ENCODE measurements at regions of chr18 and their contacts with region 1.

Region 1: DNA sequence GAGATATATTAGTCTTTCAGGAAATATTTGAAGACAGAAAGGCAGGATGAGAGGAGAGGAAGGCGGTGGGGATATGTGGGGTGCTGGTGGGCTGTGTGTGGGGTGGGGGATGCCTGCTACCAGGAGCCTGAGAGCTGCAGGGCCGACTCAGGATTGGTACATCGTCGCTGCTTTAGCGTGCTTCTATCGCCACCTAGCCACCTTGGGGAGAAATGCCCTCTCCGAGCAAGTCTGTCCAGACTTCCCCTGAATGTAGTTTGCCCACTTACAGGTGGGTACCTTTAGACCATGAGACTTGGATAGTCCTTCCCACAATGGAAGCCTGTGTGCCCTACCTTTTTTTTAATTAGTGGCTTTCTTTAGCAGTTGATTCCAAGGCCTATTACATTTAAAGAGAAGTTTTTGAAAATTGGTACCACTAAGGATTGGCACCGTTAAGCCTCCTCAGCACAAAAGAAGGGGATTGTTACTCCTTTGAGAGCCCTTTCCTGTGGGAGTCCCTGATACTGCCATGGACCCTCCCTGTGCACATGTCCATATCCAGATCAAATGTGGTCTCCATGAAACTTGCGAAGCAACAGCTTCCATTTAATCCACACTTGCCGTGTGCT is 114.1 kb upstream of the NDUFV2 start:
- DNase-seq: no peak
- H3K4me3 ChIP-seq: no peak overlapping the region
- H3K27ac ChIP-seq: no peak overlapping the region
- H3K4me1 ChIP-seq: peaks cover 10% of the 10 kb centered on the region
- H3K27me3 ChIP-seq: no peaks in the 10 kb centered on the region
- CTCF ChIP-seq: peak; percentile 32 to 70 (median 61)
- POLR2A ChIP-seq: no peak

Region 2: DNA sequence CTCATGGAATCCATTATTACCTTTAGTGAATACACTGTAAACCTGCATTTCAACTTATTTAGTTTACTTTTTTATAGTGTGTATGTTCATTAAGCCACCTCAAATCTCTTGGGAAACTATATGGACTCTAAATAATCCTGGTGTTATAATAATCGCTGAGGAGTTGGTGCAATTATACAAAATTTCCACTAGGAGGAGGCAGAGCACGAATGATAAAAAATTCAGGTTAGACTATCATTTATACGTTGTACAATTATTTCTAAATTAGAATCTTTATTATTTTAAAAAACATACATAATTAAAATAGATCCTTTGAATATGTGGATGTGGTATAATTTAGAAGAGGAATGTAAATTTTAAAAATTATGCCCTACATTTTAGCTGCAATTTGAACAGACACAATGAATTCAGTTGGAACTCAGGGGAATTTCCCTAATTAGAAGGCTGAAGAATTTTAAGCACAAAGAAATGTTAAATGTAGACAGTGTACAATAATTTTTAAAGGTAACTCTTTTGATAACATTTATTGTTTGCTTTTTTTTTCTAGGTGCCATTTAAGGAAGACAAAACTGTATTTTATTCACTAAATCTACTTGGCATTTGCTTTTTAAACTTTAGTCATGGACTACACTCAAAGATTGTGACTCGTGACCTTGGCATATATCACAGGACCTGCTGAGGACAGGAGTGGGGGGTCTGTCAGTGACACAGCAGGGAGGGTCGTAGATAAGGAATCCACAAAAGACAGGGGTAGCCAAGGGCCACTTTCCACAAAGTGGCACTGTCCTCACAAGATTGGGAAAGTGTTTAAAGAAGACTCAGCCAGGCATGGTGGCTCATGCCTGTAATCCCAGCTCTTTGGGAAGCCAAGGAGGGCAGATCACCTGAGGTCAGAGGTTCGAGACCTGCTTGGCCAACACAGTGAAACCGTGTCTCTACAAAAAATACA is 333.6 kb before region 1 on chr18:
- intact Hi-C with region 1: loop called (anchors 10 kb)
- DNase-seq: no peak
- H3K4me3 ChIP-seq: no peak overlapping the region
- H3K27ac ChIP-seq: no peak overlapping the region
- H3K4me1 ChIP-seq: no peaks in the 10 kb centered on the region
- H3K27me3 ChIP-seq: no peaks in the 10 kb centered on the region
- CTCF ChIP-seq: peak; percentile 37 to 80 (median 55)
- POLR2A ChIP-seq: no peak

Region 3: DNA sequence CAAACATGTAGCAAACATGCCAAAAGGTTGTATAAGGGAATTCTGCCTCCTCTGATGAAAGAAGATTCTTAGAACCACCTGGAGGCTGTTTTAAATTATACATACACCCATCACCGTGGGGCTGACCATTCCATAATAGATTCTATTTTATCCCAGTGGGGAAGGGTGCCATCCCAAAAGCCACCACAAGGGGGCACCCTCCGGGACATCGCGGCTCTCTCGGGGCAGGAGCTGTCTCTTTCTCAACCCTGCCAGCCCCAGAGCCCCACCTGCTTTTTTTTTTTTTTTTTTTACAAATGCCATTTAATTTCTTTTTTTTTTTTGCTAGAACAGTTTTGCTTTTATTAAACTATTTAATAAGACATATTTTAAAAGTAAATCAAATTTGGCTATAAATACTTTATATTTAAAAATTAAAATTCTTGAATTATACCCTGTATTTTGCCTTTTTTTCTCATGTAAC is 291.6 kb before region 1 on chr18:
- intact Hi-C with region 1: loop called (anchors 10 kb)
- DNase-seq: peak in 1 of 2 donors; percentile 71
- H3K4me3 ChIP-seq: no peak overlapping the region
- H3K27ac ChIP-seq: no peak overlapping the region
- H3K4me1 ChIP-seq: no peaks in the 10 kb centered on the region
- H3K27me3 ChIP-seq: no peaks in the 10 kb centered on the region
- CTCF ChIP-seq: peak; percentile 71 to 93 (median 79)
- POLR2A ChIP-seq: no peak

Measured in vagina (tissue), 2 donors.